Caco-2 (cell line): ENCODE measurements at regions of chr22 and their contacts with region 1.

Region 1: GRCh38 chr22:34105461-34106062 is 185.3 kb upstream of the LARGE1 start:
- DNase-seq: peak in 1 of 2 experiments; percentile 26
- H3K4me3 ChIP-seq: no peak overlapping the region
- H3K4me3 Mint-ChIP-seq: no peak overlapping the region
- H3K27ac Mint-ChIP-seq: no peak overlapping the region
- H3K4me1 ChIP-seq: no peaks in the 10 kb centered on the region
- H3K4me1 Mint-ChIP-seq: no peaks in the 10 kb centered on the region
- H3K27me3 ChIP-seq: no peaks in the 10 kb centered on the region
- H3K27me3 Mint-ChIP-seq: no peaks in the 10 kb centered on the region
- CTCF ChIP-seq: peak; percentile 29 to 46

Region 2: DNA sequence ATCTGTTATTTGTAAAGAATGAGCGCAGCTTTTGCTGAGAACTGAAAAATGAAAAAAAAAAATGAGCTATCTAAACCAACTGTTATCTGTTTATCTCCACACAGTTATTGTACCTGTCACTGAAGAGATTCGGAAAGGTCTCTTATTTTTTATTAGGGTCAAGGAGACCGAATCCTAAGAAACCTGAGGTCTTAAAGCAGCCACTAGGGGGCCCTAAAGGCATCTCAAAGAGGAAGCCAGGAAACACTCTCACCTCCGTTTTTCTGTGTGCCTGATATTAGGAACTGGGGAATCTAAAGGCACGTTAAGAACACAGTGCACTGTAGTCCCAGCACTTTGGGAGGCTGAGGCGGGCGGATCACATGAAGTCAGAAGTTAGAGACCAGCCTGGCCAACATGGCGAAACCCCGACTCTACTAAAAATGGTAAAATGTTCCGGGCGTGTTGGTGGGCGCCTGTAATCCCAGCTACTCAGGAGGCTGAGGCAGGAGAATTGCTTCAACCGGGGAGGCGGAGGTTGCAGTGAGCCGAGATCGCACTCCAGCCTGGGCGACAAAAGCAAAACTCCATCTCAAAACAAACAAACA is 181.8 kb before region 1 on chr22:
- CTCF ChIA-PET with region 1: no interaction called
- POLR2A ChIA-PET with region 1: no interaction called
- intact Hi-C with region 1: loop called (anchors 2 kb)
- DNase-seq: peak; percentile 67 to 69
- H3K4me3 ChIP-seq: no peak overlapping the region
- H3K4me3 Mint-ChIP-seq: peak overlapping the region; percentile 24
- H3K27ac Mint-ChIP-seq: no peak overlapping the region
- H3K4me1 ChIP-seq: no peaks in the 10 kb centered on the region; the same call in 1 of the 2 replicates
- H3K4me1 Mint-ChIP-seq: peaks cover 6% of the 10 kb centered on the region
- H3K27me3 ChIP-seq: peaks cover 2% of the 10 kb centered on the region; the same call in 1 of the 2 replicates
- H3K27me3 Mint-ChIP-seq: peaks cover 22% of the 10 kb centered on the region
- CTCF ChIP-seq: peak; percentile 62 to 70

Region 3: GRCh38 chr22:34135751-34136150 is 30.2 kb after region 1 on chr22:
- CTCF ChIA-PET with region 1: no interaction called
- POLR2A ChIA-PET with region 1: no interaction called
- intact Hi-C with region 1: no loop called
- DNase-seq: no peak
- H3K4me3 ChIP-seq: no peak overlapping the region
- H3K4me3 Mint-ChIP-seq: no peak overlapping the region
- H3K27ac Mint-ChIP-seq: no peak overlapping the region
- H3K4me1 ChIP-seq: no peaks in the 10 kb centered on the region
- H3K4me1 Mint-ChIP-seq: no peaks in the 10 kb centered on the region
- H3K27me3 ChIP-seq: no peaks in the 10 kb centered on the region
- H3K27me3 Mint-ChIP-seq: peaks cover 2% of the 10 kb centered on the region
- CTCF ChIP-seq: no peak